Transverse colon (tissue), 4 donors: ENCODE measurements at regions of chr3 and their contacts with region 1.

Region 1: GRCh38 chr3:129950318-129951046 is 24.0 kb upstream of the TRH start:
- DNase-seq: no peak
- H3K4me3 ChIP-seq: no peak overlapping the region
- H3K27ac ChIP-seq: no peak overlapping the region
- H3K4me1 ChIP-seq: no peaks in the 10 kb centered on the region
- H3K27me3 ChIP-seq: peaks cover 5% of the 10 kb centered on the region
- CTCF ChIP-seq: no peak
- EP300 ChIP-seq: no peak
- POLR2A ChIP-seq: no peak

Region 2: DNA sequence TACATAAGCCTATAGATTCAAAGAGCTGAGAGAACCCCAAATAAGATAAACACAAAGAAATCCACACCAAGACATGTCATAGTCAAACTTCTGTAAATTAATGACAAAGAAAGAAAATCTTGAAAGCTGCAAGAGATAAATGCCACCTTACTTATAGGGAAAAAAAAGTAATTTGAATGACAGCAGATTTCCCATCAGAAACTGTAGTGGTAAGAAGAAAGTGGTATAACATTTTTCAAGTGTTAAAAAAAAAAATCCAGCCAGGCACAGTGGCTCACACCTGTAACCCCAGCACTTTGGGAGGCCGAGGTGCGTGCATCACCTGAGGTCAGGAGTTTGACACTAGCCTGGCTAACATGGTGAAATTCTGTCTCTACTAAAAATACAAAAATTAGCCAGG is 994.0 kb before region 1 on chr3:
- in situ Hi-C with region 1: no loop called
- intact Hi-C with region 1: loop called (anchors 5 kb)
- DNase-seq: no peak
- H3K4me3 ChIP-seq: no peak overlapping the region
- H3K27ac ChIP-seq: no peak overlapping the region
- H3K4me1 ChIP-seq: no peaks in the 10 kb centered on the region
- H3K27me3 ChIP-seq: no peaks in the 10 kb centered on the region
- CTCF ChIP-seq: no peak
- EP300 ChIP-seq: no peak
- POLR2A ChIP-seq: no peak

Region 3: GRCh38 chr3:129890125-129890524 is 60.4 kb before region 1 on chr3:
- in situ Hi-C with region 1: no loop called
- intact Hi-C with region 1: no loop called
- DNase-seq: no peak
- H3K4me3 ChIP-seq: no peak overlapping the region
- H3K27ac ChIP-seq: peak overlapping the region; percentile 45 to 98 (median 54)
- H3K4me1 ChIP-seq: peaks cover 21 to 37% (median 31%) of the 10 kb centered on the region in 4 donors
- H3K27me3 ChIP-seq: no peaks in the 10 kb centered on the region
- CTCF ChIP-seq: no peak
- EP300 ChIP-seq: no peak
- POLR2A ChIP-seq: no peak

Region 4: DNA sequence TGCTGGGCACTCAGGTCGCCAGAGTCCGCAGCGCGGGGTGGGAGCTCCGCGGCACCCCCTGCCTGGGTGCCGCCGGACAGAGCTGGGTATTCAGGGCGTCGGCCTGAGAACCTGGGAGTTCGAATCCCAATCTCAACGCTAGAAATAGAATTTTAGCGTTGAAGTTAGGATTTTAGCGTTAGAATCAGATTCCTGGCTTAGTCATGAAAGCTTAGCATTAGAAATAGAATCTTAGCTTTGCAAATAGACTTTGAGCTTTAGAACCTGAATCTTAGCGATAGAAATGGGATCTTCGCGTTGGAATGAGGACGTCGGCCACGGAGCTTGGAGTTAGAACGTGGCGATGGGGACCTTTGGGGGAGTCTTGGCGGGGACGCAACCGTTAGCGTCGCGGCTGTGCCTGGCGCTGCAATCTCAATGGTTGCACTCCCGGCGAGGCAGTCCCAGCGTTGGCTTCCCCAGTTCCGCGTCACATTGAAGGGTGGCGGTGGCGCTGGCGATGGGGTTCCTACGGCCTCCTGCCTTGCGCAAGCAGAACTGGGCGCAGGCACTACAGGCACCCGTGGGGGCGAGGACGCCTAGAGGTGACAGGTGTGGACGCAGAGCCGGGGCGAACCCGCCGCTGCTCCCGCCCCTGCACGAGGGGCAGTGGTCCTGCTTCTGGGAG is 24.7 kb after region 1 on chr3:
- in situ Hi-C with region 1: no loop called
- intact Hi-C with region 1: loop called (anchors 1 kb)
- DNase-seq: peak; percentile 10
- H3K4me3 ChIP-seq: peak overlapping the region in 2 of 4 donors; percentile 14 to 34
- H3K27ac ChIP-seq: no peak overlapping the region
- H3K4me1 ChIP-seq: peaks cover 3 to 16% (median 15%) of the 10 kb centered on the region in 4 donors
- H3K27me3 ChIP-seq: peaks cover 68% of the 10 kb centered on the region
- CTCF ChIP-seq: no peak
- EP300 ChIP-seq: no peak
- POLR2A ChIP-seq: no peak